ENCODE measurements at regions of chr1 and their contacts with region 1.

Region 1: GRCh38 chr1:183185941-183186490 is at the start of gene LAMC2:
- DNase-seq: peak; percentile 90
- H3K4me3 ChIP-seq: peak within 1 kb of the TSS; percentile 69
- H3K4me3 Mint-ChIP-seq: peak within 1 kb of the TSS; percentile 87
- H3K27ac Mint-ChIP-seq: peak within 1 kb of the TSS; percentile 89
- H3K4me1 ChIP-seq: peaks cover 17% of the 10 kb centered on the region
- H3K4me1 Mint-ChIP-seq: peaks cover 13% of the 10 kb centered on the region
- H3K27me3 ChIP-seq: no peaks in the 10 kb centered on the region
- H3K27me3 Mint-ChIP-seq: no peaks in the 10 kb centered on the region
- CTCF ChIP-seq: peak; percentile 61 to 73
- total RNA-seq, gene LAMC2: 34.9 and 51.0 TPM in 2 replicates

Region 2: GRCh38 chr1:183023601-183024316 is 162.3 kb before region 1 on chr1:
- CTCF ChIA-PET with region 1: no interaction called
- POLR2A ChIA-PET with region 1: no interaction called
- intact Hi-C with region 1: loop called (anchors 1 kb)
- DNase-seq: peak; percentile 93
- H3K4me3 ChIP-seq: peak overlapping the region; percentile 92
- H3K4me3 Mint-ChIP-seq: peak overlapping the region; percentile 97
- H3K27ac Mint-ChIP-seq: peak overlapping the region; percentile 90
- H3K4me1 ChIP-seq: peaks cover 50% of the 10 kb centered on the region
- H3K4me1 Mint-ChIP-seq: peaks cover 33% of the 10 kb centered on the region
- H3K27me3 ChIP-seq: no peaks in the 10 kb centered on the region
- H3K27me3 Mint-ChIP-seq: no peaks in the 10 kb centered on the region
- CTCF ChIP-seq: peak; percentile 50 to 85

Region 3: DNA sequence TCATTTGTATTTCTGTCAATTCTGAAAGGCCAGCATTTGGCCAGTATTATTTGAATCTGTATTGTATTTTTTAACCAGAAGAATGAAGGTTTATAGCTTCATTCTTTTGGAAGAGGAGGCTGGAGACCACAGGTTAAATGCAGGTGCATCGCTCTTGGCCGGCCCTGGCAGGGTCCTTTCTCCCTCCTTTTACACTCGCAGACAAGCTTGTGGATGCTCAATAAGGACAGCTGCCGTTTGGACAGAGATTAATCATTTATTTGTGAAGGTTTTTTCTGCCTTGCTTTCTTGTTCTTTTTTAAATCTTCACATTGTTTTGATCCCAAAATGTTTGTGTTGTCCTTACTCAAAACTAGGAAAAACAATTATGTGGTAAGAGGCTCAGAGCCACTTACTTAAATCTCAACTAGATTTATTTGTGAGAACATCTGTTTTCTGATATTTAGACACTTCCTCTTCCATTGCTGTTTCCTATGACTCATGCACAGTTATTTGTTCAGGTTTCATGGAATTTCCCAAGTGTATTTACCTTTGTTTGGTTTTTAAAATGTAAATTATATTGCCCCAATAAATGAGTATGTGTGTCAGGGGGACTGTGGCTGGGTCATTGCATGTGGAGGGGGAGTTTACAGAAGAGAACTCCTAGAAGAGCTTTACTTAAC is 46.6 kb before region 1 on chr1:
- CTCF ChIA-PET with region 1: interaction called, 3 read pairs
- POLR2A ChIA-PET with region 1: no interaction called
- intact Hi-C with region 1: loop called (anchors 2 kb)
- DNase-seq: peak in 1 of 2 experiments; percentile 30
- H3K4me3 ChIP-seq: no peak overlapping the region
- H3K4me3 Mint-ChIP-seq: peak overlapping the region; percentile 47
- H3K27ac Mint-ChIP-seq: peak overlapping the region; percentile 82
- H3K4me1 ChIP-seq: peaks cover 28% of the 10 kb centered on the region; the same call in 1 of the 2 replicates
- H3K4me1 Mint-ChIP-seq: peaks cover 11% of the 10 kb centered on the region
- H3K27me3 ChIP-seq: no peaks in the 10 kb centered on the region
- H3K27me3 Mint-ChIP-seq: no peaks in the 10 kb centered on the region
- CTCF ChIP-seq: no peak